Left ventricle myocardium superior (tissue), 1 donor: ENCODE measurements at regions of chr2 and their contacts with region 1.

Region 1: GRCh38 chr2:113203901-113204519 is 30.2 kb downstream of the PSD4 start:
- DNase-seq: peak; percentile 68
- ATAC-seq: peak; percentile 72

Region 2: GRCh38 chr2:113328043-113328442 is 124.0 kb after region 1 on chr2:
- intact Hi-C with region 1: no loop called
- DNase-seq: no peak
- ATAC-seq: no peak

Region 3: DNA sequence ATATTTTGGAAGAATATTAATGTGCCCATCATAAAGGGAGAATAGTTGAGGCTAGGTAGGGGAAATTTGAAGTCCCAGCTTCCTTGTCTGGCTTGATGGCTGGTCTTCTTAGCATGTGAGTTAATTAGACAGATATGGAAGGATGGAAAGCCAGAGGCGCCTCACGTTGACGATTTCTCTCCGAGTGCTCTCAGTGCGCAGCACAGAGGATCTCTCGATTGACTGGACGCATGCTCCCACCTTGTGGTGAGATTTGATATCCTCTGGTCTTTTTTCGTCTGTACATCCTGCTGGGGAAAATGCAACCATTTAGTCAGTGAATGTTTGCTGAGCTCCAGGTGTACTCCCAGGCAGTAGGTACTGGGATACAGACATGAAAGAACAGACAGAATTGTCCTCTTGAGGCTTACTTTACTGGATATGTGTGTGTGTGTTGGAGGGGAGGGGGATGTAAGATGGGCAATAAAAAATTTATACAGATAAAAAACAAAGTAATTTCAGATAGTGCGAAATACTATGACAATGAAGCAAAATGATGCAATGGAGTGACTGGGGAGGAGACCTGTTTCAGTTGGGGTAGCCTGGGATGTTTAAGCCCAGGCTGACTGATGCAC is 166.6 kb after region 1 on chr2:
- intact Hi-C with region 1: loop called (anchors 5 kb)
- DNase-seq: peak; percentile 55
- ATAC-seq: peak; percentile 94